CD4-positive, alpha-beta T cell (primary cell): ENCODE measurements at regions of chr18 and their contacts with region 1.

Region 1: GRCh38 chr18:28743115-28743514 is 566.2 kb upstream of the CDH2 start:
- DNase-seq: no peak
- ATAC-seq: no peak
- H3K4me3 ChIP-seq: no peak overlapping the region
- H3K4me3 Mint-ChIP-seq: no peak overlapping the region
- H3K27ac ChIP-seq: no peak overlapping the region
- H3K27ac Mint-ChIP-seq: no peak overlapping the region
- H3K4me1 ChIP-seq: no peaks in the 10 kb centered on the region
- H3K4me1 Mint-ChIP-seq: no peaks in the 10 kb centered on the region
- H3K27me3 ChIP-seq: no peaks in the 10 kb centered on the region
- H3K27me3 Mint-ChIP-seq: no peaks in the 10 kb centered on the region
- CTCF ChIP-seq: no peak

Region 2: GRCh38 chr18:28802546-28802945 is 59.4 kb after region 1 on chr18:
- CTCF ChIA-PET with region 1: no interaction called
- POLR2A ChIA-PET with region 1: no interaction called
- intact Hi-C with region 1: loop called in 1 of 2 experiments (anchors 10 kb)
- DNase-seq: no peak
- ATAC-seq: no peak
- H3K4me3 ChIP-seq: no peak overlapping the region
- H3K4me3 Mint-ChIP-seq: no peak overlapping the region
- H3K27ac ChIP-seq: no peak overlapping the region
- H3K27ac Mint-ChIP-seq: no peak overlapping the region
- H3K4me1 ChIP-seq: no peaks in the 10 kb centered on the region
- H3K4me1 Mint-ChIP-seq: no peaks in the 10 kb centered on the region
- H3K27me3 ChIP-seq: no peaks in the 10 kb centered on the region
- H3K27me3 Mint-ChIP-seq: no peaks in the 10 kb centered on the region
- CTCF ChIP-seq: no peak